ENCODE measurements at regions of chr2 and their contacts with region 1.

Region 1: GRCh38 chr2:215949991-215950404 is 63.4 kb downstream of the MREG start:
- DNase-seq: peak; percentile 64
- H3K4me3 Mint-ChIP-seq: no peak overlapping the region
- H3K27ac Mint-ChIP-seq: no peak overlapping the region
- H3K4me1 Mint-ChIP-seq: no peaks in the 10 kb centered on the region
- H3K27me3 Mint-ChIP-seq: no peaks in the 10 kb centered on the region
- CTCF ChIP-seq: peak; percentile 56

Region 2: DNA sequence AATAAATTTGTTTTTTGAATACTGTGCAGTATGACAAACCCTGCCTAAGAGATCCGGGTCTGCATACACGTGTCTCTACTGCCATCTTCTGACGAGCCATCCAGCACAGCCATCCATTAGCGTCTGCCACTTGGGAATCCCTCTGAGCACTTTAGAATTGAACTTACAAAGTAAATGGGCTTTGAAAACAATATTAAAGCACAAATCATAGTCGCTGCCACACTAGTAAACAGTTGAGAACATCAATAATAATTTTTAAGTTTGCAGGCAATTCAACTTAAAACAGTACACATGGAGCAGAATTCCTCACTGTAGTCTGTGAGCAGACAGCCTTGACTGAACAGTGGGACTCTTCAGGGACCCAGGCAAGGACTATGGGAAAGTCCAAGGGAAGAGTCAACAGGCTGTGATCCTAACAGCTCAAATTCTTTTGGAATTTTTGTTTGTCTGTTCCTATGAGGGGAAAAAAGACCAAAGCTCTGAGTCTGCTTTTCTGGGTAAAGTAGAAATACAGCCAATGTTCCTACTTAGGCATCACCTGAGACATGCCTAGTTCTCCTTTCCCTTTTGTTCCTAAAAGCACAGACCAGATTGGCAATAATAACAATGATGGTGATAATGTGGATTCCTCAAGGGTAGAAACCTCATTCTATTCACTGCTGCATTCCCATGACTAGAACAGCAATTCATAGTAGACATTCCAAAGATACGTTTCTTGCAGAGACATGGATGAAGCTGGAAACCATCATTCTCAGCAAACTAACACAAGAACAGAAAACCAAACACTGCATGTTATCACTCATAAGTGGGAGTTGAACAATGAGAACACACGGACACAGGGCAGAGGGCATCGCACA is 29.5 kb before region 1 on chr2:
- CTCF ChIA-PET with region 1: no interaction called
- POLR2A ChIA-PET with region 1: no interaction called
- intact Hi-C with region 1: no loop called
- DNase-seq: peak; percentile 80
- H3K4me3 Mint-ChIP-seq: no peak overlapping the region
- H3K27ac Mint-ChIP-seq: no peak overlapping the region
- H3K4me1 Mint-ChIP-seq: peaks cover 27% of the 10 kb centered on the region
- H3K27me3 Mint-ChIP-seq: no peaks in the 10 kb centered on the region
- CTCF ChIP-seq: peak; percentile 90

Region 3: DNA sequence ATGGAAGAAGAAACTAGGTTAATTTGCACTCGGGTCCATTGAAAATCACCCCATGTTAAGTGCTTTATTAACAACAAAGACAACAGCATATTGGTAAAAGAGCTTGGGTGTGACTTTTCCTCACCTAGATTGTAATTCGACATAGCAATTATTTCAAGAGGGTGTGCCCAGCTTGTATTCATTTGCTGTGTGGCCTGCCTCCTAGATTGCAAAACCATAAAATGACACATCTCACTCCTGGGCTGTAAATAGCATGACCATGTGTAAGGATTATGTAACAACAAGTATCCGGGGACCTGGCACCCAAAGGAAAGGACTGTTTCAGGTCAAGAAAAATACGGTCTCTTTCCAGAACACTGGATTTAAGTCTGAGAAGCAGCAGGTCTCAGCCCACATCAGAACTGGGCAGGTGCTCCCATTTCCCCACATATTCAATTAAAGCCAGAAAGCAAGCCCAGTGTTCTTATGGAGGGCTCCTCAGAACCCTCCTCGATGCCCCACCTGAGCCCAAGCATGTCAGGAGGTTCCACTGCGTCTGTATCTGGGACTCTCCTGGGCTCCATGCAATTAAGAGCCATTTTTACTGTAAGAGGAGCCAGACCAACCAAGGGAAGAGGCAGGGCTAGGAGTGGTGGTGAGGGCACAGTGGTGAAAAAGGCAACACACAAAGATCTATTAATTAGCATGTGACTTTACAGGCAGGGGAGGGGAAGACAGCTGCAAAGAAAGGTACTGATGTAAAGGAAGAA is 24.1 kb after region 1 on chr2:
- CTCF ChIA-PET with region 1: interaction called, 30 read pairs
- POLR2A ChIA-PET with region 1: interaction called, 3 read pairs
- intact Hi-C with region 1: no loop called
- DNase-seq: peak; percentile 88
- H3K4me3 Mint-ChIP-seq: no peak overlapping the region
- H3K27ac Mint-ChIP-seq: no peak overlapping the region
- H3K4me1 Mint-ChIP-seq: peaks cover 20% of the 10 kb centered on the region
- H3K27me3 Mint-ChIP-seq: no peaks in the 10 kb centered on the region
- CTCF ChIP-seq: no peak

Region 4: DNA sequence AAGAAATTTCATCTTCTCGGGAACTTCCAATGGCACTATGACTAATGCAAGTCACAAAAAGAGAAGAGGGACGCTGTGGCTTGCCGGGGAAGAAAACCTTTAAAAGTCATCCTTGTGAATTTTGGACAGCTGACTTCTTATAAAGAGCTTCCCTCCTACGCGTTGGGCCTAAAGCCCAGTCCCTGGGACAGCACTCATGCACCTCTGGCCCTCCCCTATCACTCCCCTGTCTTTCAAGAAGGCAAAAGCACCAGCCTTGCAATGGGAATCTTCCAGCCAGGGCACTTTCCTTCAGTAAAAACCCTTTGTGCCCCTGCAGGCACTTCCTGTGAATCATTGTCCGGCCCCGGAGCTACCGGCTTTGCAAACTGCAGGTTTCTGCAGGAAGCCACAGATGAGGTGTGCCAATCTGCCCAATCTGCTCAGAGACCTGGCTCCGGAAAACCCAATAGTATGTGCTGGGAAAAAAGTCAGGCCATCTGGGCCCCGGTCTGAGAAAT is 56.2 kb after region 1 on chr2:
- CTCF ChIA-PET with region 1: interaction called, 41 read pairs
- POLR2A ChIA-PET with region 1: interaction called, 4 read pairs
- intact Hi-C with region 1: no loop called
- DNase-seq: peak; percentile 96
- H3K4me3 Mint-ChIP-seq: peak overlapping the region; percentile 51
- H3K27ac Mint-ChIP-seq: peak overlapping the region; percentile 71
- H3K4me1 Mint-ChIP-seq: peaks cover 36% of the 10 kb centered on the region
- H3K27me3 Mint-ChIP-seq: no peaks in the 10 kb centered on the region
- CTCF ChIP-seq: no peak

Region 5: GRCh38 chr2:216013080-216013909 is 63.3 kb after region 1 on chr2 and contains the start of gene MREG:
- CTCF ChIA-PET with region 1: interaction called, 41 read pairs
- POLR2A ChIA-PET with region 1: interaction called, 3 read pairs
- intact Hi-C with region 1: loop called (anchors 2 kb)
- DNase-seq: peak; percentile 89
- H3K4me3 Mint-ChIP-seq: peak within 1 kb of the TSS; percentile 82
- H3K27ac Mint-ChIP-seq: peak within 1 kb of the TSS; percentile 84
- H3K4me1 Mint-ChIP-seq: peaks cover 31% of the 10 kb centered on the region
- H3K27me3 Mint-ChIP-seq: no peaks in the 10 kb centered on the region
- CTCF ChIP-seq: peak; percentile 52
- total RNA-seq, gene MREG: 6.8 and 10.4 TPM in 2 replicates

Region 6: GRCh38 chr2:216235462-216235861 is 285.5 kb after region 1 on chr2:
- CTCF ChIA-PET with region 1: no interaction called
- POLR2A ChIA-PET with region 1: no interaction called
- intact Hi-C with region 1: no loop called
- DNase-seq: no peak
- H3K4me3 Mint-ChIP-seq: no peak overlapping the region
- H3K27ac Mint-ChIP-seq: no peak overlapping the region
- H3K4me1 Mint-ChIP-seq: no peaks in the 10 kb centered on the region
- H3K27me3 Mint-ChIP-seq: no peaks in the 10 kb centered on the region
- CTCF ChIP-seq: no peak